ENCODE measurements at regions of chr1 and their contacts with region 1.

Region 1: DNA sequence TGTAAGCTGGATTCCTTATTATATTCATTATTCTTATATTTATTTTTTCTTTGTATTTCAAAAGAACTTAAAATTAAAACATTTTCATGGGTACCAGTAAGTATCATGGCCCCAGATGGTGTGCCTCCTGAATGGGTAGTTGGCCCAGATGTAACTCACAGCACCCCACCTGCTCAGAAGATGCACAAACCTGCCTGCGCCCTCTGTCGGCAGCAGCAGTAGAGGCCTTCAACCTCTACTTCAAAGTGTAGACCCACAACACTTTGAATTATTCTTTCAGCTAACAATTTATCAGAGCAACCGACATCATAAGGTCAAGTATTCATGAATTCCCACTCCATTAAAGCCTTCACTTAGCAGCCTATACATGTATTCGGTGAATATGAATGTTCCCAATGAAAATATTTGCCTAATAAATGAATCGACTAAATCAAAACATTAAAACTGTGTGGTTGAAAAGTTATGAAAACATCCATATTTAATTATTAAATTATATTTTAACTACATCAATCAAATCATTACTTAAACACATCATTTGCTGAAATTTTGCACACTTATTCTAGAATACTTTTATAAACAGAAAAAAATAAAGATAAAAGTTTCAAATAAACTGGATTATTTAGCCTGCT is 25.4 kb downstream of the PIGM start:
- DNase-seq: peak; percentile 84
- H3K4me3 Mint-ChIP-seq: no peak overlapping the region
- H3K27ac Mint-ChIP-seq: no peak overlapping the region
- H3K4me1 Mint-ChIP-seq: no peaks in the 10 kb centered on the region
- H3K27me3 Mint-ChIP-seq: peaks cover 20% of the 10 kb centered on the region

Region 2: GRCh38 chr1:159798893-159799292 is 207.5 kb before region 1 on chr1:
- CTCF ChIA-PET with region 1: interaction called, 12 read pairs
- POLR2A ChIA-PET with region 1: no interaction called
- DNase-seq: peak; percentile 51
- H3K4me3 Mint-ChIP-seq: no peak overlapping the region
- H3K27ac Mint-ChIP-seq: no peak overlapping the region
- H3K4me1 Mint-ChIP-seq: peaks cover 18% of the 10 kb centered on the region
- H3K27me3 Mint-ChIP-seq: peaks cover 43% of the 10 kb centered on the region

Region 3: GRCh38 chr1:159845763-159846629 is 160.4 kb before region 1 on chr1:
- CTCF ChIA-PET with region 1: no interaction called
- POLR2A ChIA-PET with region 1: no interaction called
- DNase-seq: no peak
- H3K4me3 Mint-ChIP-seq: no peak overlapping the region
- H3K27ac Mint-ChIP-seq: no peak overlapping the region
- H3K4me1 Mint-ChIP-seq: peaks cover 5% of the 10 kb centered on the region
- H3K27me3 Mint-ChIP-seq: peaks cover 6% of the 10 kb centered on the region

Region 4: GRCh38 chr1:159891275-159892157 is 114.9 kb before region 1 on chr1:
- CTCF ChIA-PET with region 1: interaction called, 11 read pairs
- POLR2A ChIA-PET with region 1: no interaction called
- DNase-seq: peak; percentile 81
- H3K4me3 Mint-ChIP-seq: no peak overlapping the region
- H3K27ac Mint-ChIP-seq: no peak overlapping the region
- H3K4me1 Mint-ChIP-seq: peaks cover 15% of the 10 kb centered on the region
- H3K27me3 Mint-ChIP-seq: peaks cover 14% of the 10 kb centered on the region

Region 5: DNA sequence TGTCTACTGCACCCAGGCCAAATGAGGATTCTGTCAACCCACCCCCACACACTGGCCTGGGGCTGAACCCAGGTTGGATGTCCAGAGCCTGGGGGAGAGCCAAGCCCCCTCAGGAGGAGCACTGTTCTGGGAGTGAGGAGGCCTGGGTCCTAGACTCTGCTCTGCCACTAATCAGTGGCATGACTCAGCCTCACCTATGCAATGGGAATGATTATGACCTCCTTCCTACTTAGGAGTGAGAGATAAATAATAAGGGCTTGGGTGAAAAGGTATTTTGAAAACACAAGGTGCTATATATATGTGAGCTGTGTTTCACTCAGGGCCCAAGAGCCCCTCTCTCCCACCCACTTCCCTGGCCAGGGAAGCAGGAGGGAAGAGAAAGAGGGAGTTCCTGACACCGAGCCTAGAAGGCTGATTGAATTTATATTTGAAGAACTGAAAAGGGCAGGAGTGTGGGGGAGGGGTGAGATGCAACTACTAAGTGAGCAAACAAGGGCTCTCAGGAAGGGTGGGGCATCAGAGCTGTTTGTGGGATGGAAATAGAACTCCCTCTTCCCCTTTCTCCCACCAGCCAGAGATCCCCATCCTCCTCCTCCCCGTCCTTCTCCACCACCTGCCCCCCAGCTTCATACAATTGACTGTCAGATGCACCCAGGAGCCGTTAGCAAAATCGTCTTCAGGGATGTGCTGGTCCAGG is 69.2 kb before region 1 on chr1:
- CTCF ChIA-PET with region 1: interaction called, 32 read pairs
- POLR2A ChIA-PET with region 1: no interaction called
- DNase-seq: no peak
- H3K4me3 Mint-ChIP-seq: no peak overlapping the region
- H3K27ac Mint-ChIP-seq: no peak overlapping the region
- H3K4me1 Mint-ChIP-seq: peaks cover 24% of the 10 kb centered on the region
- H3K27me3 Mint-ChIP-seq: peaks cover 17% of the 10 kb centered on the region

Region 6: GRCh38 chr1:160018900-160019299 is 12.5 kb after region 1 on chr1:
- CTCF ChIA-PET with region 1: interaction called, 14 read pairs
- POLR2A ChIA-PET with region 1: no interaction called
- DNase-seq: no peak
- H3K4me3 Mint-ChIP-seq: no peak overlapping the region
- H3K27ac Mint-ChIP-seq: no peak overlapping the region
- H3K4me1 Mint-ChIP-seq: peaks cover 3% of the 10 kb centered on the region
- H3K27me3 Mint-ChIP-seq: peaks cover 12% of the 10 kb centered on the region